Posterior cingulate gyrus (tissue), 11 donors: ENCODE measurements at regions of chr19 and their contacts with region 1.

Region 1: DNA sequence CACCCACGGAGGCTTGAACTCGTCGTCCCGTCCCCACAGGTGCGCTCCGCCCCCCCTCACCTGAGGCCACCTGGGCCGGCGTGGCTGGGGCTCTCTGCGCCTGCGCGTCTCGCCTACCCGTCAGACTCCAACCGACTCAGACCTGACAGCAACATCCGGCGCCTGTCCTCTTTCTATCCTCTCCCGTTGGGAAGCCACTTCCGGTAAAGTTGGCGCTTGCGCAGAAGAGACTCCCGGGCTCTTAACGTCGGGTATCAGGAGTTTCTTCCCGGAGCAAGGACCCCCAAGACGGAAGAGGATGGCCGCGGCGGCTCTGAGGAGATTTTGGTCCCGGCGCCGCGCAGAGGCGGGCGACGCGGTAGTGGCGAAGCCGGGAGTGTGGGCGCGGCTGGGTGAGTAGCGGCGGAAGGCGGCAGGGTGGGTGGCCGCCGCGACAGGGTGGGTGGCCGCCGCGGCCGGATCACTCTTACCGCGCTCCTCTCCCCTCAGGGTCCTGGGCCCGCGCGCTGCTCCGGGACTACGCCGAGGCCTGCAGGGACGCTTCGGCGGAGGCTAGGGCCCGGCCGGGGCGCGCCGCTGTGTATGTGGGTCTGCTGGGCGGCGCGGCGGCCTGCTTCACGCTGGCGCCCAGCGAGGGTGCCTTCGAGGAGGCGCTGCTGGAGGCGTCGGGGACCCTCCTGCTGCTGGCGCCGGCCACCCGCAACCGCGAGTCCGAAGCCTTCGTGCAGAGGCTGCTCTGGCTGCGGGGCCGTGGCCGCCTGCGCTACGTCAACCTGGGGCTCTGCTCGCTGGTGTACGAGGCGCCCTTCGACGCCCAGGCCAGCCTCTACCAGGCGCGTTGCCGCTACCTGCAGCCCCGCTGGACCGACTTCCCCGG is at the starts of genes TIMM29 and YIPF2:
- DNase-seq: peak; percentile 95 to 99 (median 97)

Region 2: DNA sequence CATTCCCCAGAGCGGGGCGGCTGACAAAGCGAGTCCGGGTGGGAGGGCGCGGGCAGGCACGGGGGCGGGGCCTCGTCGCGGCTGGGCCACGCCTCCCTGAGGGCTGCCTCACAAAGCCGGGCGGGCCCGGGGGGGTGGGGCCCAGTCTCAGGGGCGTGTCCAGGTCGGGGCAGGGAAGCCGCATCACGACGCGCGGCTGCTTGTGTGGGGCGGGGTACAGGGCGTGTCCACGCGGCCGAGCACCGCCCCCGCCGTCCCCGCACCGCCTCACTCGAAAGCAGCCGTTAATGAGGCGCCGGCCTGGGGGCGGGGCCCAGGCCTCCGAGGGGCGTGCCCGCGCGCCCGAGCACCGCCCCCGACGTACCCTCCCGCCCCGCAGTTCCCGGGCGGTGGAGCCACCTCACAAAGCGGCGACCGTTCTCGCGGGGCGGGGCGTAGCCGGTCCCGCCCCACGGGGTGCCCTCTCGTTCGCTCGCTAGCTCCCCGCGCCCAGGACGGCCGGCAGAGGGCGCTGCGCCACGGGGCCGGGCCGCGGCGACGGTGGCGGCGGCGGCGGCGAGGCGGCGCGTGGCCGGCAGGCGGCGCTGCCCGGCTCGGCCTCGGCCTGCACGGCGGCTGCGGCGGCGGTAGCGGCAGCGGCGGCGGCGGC is 57.7 kb before region 1 on chr19 and contains the start of gene CARM1:
- intact Hi-C with region 1: loop called (anchors 5 kb)
- DNase-seq: peak; percentile 95 to 100 (median 99)

Region 3: DNA sequence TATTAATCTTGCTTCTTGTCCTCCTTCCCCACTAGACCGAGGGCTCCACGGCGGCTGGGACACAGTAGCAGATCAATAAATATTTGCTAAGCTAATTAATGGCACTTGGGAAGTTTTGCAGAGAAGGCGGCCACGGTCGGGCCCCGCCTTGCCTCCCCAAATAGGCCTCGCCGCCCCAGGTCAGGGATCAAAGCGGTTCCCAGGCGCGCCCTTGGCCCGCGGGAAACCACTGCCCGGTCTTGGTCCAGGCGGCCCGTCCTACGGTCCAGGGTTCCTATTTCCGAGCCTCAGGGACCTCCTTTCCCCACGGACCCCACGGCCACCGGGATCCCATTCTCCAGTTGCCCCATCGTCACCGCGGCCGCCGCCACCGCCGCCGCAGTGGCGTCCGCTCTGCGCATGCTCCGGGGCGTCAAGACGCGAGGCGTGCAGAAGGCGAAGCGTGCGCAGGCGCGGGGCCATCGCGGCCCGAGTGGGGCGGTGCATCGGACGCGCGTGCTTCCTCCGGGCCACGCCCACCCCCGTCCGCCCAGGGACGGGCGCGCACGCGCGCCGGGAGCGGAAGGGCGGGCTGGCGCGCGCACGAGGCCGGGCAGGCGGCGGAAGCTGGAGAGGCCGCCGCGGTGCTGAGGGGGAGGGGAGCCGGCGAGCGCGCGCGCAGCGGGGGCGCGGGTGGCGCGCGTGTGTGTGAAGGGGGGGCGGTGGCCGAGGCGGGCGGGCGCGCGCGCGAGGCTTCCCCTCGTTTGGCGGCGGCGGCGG is 31.7 kb after region 1 on chr19 and contains the start of gene SMARCA4:
- intact Hi-C with region 1: loop called (anchors 1 kb)
- DNase-seq: peak; percentile 88 to 99 (median 94)

Region 4: GRCh38 chr19:11005521-11005920 is 76.8 kb after region 1 on chr19:
- intact Hi-C with region 1: no loop called
- DNase-seq: no peak